T-cell (primary cell): ENCODE measurements at regions of chr5 and their contacts with region 1.

Region 1: DNA sequence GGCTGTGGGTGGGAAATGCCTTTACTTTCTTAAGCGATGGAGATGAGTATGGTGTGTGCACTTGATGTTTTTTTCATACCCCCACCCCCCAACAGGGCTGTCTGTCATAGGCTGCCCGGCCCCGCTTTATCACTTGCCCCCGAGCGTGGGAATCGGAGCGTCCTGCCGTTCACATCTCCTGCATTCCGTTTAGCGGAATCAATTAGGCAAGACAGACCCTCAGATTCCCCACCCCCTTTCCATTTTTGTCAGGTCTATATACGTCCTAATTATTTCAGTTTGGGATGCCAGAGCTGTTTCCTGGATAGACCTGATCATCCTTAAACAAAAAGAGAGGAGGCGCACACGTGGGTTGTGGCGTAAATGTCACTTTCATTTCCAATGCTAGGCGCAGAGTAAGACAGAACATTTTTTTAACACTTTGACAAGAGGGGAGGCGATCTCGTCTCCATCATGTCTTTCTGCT is 217.2 kb downstream of the MEF2C start:
- DNase-seq: no peak
- ATAC-seq: no peak
- H3K4me3 ChIP-seq: peak overlapping the region in 1 of 2 donors; percentile 25
- H3K4me3 Mint-ChIP-seq: peak overlapping the region; percentile 43 to 84 (median 70)
- H3K27ac ChIP-seq: no peak overlapping the region
- H3K27ac Mint-ChIP-seq: no peak overlapping the region
- H3K4me1 ChIP-seq: peaks cover 3 to 25% of the 10 kb centered on the region in 2 experiments
- H3K4me1 Mint-ChIP-seq: peaks cover 31 to 39% (median 33%) of the 10 kb centered on the region in 3 donors
- H3K27me3 ChIP-seq: peaks cover 24 to 36% of the 10 kb centered on the region in 2 experiments
- H3K27me3 Mint-ChIP-seq: peaks cover 83 to 86% of the 10 kb centered on the region in 2 donors

Region 2: DNA sequence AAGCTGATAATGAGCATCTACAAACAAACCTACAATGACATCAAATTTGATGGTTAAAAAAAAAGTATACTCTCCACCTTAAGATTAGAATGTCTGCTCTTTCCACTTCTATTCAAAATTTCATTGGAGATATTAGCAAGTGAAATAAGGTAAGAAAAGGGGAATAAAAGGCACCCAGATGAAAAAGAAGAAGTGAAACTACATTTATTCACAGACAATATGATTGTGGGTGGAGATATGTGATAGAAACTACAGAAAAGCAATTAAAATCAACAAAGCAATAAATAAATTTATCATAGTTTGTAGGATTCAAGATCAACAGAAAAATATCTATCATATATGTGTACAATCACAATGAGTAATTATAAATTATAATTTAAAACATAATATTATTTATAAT is 858.0 kb before region 1 on chr5:
- CTCF ChIA-PET with region 1: no interaction called
- POLR2A ChIA-PET with region 1: interaction called in 1 of 2 experiments, 14 read pairs
- DNase-seq: no peak
- ATAC-seq: no peak
- H3K4me3 ChIP-seq: no peak overlapping the region
- H3K4me3 Mint-ChIP-seq: no peak overlapping the region
- H3K27ac ChIP-seq: no peak overlapping the region
- H3K27ac Mint-ChIP-seq: no peak overlapping the region
- H3K4me1 ChIP-seq: no peaks in the 10 kb centered on the region
- H3K4me1 Mint-ChIP-seq: no peaks in the 10 kb centered on the region
- H3K27me3 ChIP-seq: no peaks in the 10 kb centered on the region
- H3K27me3 Mint-ChIP-seq: peaks cover 0 to 4% of the 10 kb centered on the region in 2 donors

Region 3: GRCh38 chr5:88707216-88707965 is 41.6 kb after region 1 on chr5:
- CTCF ChIA-PET with region 1: no interaction called
- POLR2A ChIA-PET with region 1: no interaction called
- DNase-seq: no peak
- ATAC-seq: no peak
- H3K4me3 ChIP-seq: no peak overlapping the region
- H3K4me3 Mint-ChIP-seq: no peak overlapping the region
- H3K27ac ChIP-seq: no peak overlapping the region
- H3K27ac Mint-ChIP-seq: no peak overlapping the region
- H3K4me1 ChIP-seq: no peaks in the 10 kb centered on the region
- H3K4me1 Mint-ChIP-seq: no peaks in the 10 kb centered on the region
- H3K27me3 ChIP-seq: peaks cover 0 to 7% of the 10 kb centered on the region in 2 experiments
- H3K27me3 Mint-ChIP-seq: peaks cover 13 to 28% of the 10 kb centered on the region in 2 donors

Region 4: GRCh38 chr5:89015409-89015808 is 349.6 kb after region 1 on chr5:
- CTCF ChIA-PET with region 1: interaction called in 1 of 2 experiments, 10 read pairs
- POLR2A ChIA-PET with region 1: no interaction called
- DNase-seq: no peak
- ATAC-seq: no peak
- H3K4me3 ChIP-seq: no peak overlapping the region
- H3K4me3 Mint-ChIP-seq: no peak overlapping the region
- H3K27ac ChIP-seq: no peak overlapping the region
- H3K27ac Mint-ChIP-seq: no peak overlapping the region
- H3K4me1 ChIP-seq: no peaks in the 10 kb centered on the region
- H3K4me1 Mint-ChIP-seq: no peaks in the 10 kb centered on the region
- H3K27me3 ChIP-seq: no peaks in the 10 kb centered on the region
- H3K27me3 Mint-ChIP-seq: peaks cover 0 to 4% of the 10 kb centered on the region in 2 donors